ENCODE measurements at regions of chr11 and their contacts with region 1.

Region 1: DNA sequence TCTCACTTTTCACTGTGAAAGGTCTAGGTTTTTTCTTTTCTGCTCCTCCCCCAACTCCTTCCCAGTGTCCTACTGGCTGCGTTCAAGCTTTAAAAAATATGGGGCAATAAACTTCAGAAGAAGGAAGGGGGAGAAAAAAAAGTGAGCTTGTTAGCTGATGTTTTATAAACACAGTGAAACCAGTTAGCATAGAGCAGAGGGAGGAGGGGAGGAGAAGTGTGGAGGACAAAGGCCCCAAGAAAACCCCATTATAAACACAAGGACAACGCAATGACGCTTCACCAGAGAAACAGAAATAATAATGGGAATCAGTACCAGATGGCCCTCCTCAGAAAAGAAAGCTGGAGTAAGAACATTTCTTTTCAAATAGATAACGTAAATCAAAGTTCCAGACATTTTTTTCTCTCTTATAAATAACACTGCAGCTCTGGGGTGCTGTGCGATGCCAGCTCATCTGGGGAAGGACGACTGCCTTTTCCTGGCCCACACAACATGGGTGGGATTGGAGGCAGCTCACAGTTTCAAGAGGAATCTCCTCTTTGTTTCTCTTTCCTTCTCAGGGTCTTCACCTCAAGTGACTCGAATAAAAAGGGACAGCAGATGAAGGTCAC is 235.4 kb upstream of the NARS2 start:
- DNase-seq: no peak
- H3K4me3 ChIP-seq: no peak overlapping the region
- H3K27ac ChIP-seq: peak overlapping the region in 42 of 59 donors; percentile 1 to 69 (median 40)
- H3K27me3 ChIP-seq: no peaks in the 10 kb centered on the region
- CTCF ChIP-seq: no peak

Region 2: DNA sequence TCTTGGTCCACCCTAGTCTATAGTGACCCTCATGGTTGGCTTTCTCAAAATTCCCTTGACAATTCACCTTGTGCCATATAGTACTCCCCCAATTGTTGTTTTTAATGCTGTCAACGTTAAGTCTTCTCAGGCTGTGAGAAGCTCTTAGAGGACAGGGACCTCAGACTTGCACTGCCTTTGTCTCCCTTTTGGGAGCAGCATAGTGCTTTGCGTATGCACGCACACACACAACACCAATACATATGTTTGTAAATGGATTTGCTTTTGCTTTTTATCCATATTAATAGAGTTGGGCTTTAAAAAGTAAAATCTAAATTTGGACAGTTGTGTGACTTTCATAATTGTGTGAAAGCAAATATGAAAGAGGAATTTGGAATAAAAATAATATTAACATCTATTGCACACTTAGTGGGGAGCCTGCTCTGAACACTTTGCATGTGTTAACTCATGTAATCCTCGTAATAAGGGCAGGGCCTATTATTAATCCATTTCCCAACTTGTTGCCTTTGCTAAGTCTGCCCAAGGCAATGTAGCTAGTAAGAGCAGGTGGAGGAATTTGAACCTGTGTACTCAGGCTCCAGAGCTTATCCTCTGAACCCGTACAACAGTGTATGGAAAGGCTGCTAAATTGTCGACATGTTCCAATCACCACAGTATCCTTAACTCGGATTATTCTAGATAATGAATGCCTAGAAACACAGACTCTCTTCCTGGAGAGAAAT is 22.4 kb after region 1 on chr11:
- intact Hi-C with region 1: loop called in 1 of 2 experiments (anchors 2 kb)
- DNase-seq: no peak
- H3K4me3 ChIP-seq: no peak overlapping the region
- H3K27ac ChIP-seq: peak overlapping the region in 7 of 59 donors; percentile 12 to 67 (median 55)
- H3K27me3 ChIP-seq: no peaks in the 10 kb centered on the region
- CTCF ChIP-seq: peak in 33 of 56 donors; percentile 9 to 56 (median 28)

Measured in dorsolateral prefrontal cortex (tissue), 120 donors.